CD8-positive, alpha-beta T cell (primary cell): ENCODE measurements at regions of chr16 and their contacts with region 1.

Region 1: DNA sequence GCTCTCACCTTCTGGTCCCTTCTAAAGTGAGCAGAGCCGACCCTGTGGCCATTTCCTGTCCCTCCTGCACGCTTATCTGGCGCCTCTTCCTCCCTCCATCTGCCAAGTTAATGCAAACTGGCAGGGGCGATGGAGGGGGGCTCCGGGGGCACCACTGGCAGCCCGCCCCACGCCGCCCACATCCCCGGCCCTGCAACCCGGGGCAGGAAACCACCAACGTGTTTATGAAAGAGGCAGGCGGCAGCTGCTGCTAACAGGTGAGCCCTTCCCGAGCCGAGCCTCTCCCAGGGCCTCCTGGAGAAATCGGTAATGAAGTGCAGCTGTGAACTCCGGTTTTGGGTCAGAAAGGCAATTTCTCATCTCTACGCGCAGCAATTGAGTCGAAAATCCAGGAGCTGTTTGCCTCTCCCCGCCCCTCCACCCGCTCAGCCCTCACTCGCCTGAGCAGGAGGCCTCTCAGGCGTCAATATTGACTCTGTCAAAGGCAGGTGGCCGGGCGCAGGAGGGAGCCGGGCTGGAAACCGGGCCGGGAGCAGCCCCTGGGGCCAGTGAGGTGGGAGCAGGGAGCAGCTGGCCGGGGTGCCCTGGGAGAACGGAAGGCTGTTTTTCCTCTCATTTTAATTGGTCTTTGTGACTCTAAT is 164.4 kb upstream of the GSE1 start:
- DNase-seq: peak; percentile 34 to 90 (median 71)
- ATAC-seq: peak; percentile 83
- H3K4me3 ChIP-seq: peak overlapping the region; percentile 0 to 39
- H3K4me3 Mint-ChIP-seq: peak overlapping the region; percentile 70
- H3K27ac ChIP-seq: peak overlapping the region; percentile 52 to 64
- H3K27ac Mint-ChIP-seq: peak overlapping the region; percentile 97
- H3K4me1 ChIP-seq: peaks cover 76% of the 10 kb centered on the region
- H3K4me1 Mint-ChIP-seq: peaks cover 61% of the 10 kb centered on the region
- H3K27me3 ChIP-seq: no peaks in the 10 kb centered on the region
- H3K27me3 Mint-ChIP-seq: no peaks in the 10 kb centered on the region
- CTCF ChIP-seq: no peak

Region 2: DNA sequence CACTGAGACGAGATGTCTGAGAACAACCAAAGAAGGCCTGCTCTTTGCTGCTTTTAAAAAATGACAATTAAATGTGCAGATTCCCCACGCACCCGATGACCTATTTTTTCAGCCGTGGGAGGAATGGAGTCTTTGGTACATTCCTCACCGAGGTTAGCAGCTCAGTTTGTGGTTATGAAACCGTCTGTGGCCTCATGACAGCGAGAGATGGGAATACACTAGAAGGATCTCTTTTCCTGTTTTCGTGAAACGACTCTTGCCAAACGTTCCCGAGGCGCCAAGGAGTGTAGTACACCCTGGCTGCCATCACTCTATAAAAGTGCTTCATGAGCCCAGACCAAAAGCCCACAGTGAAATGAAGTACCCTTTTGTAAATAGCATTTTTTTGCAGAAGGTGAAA is 541.1 kb before region 1 on chr16:
- CTCF ChIA-PET with region 1: no interaction called
- POLR2A ChIA-PET with region 1: no interaction called
- intact Hi-C with region 1: no loop called
- DNase-seq: no peak
- ATAC-seq: no peak
- H3K4me3 ChIP-seq: no peak overlapping the region
- H3K4me3 Mint-ChIP-seq: no peak overlapping the region
- H3K27ac ChIP-seq: no peak overlapping the region
- H3K27ac Mint-ChIP-seq: no peak overlapping the region
- H3K4me1 ChIP-seq: no peaks in the 10 kb centered on the region
- H3K4me1 Mint-ChIP-seq: no peaks in the 10 kb centered on the region
- H3K27me3 ChIP-seq: no peaks in the 10 kb centered on the region
- H3K27me3 Mint-ChIP-seq: no peaks in the 10 kb centered on the region
- CTCF ChIP-seq: no peak

Region 3: GRCh38 chr16:85420501-85421337 is 28.0 kb before region 1 on chr16:
- CTCF ChIA-PET with region 1: interaction called, 12 read pairs
- POLR2A ChIA-PET with region 1: interaction called, 6 read pairs
- intact Hi-C with region 1: no loop called
- DNase-seq: peak; percentile 60 to 87 (median 72)
- ATAC-seq: peak; percentile 91
- H3K4me3 ChIP-seq: no peak overlapping the region
- H3K4me3 Mint-ChIP-seq: no peak overlapping the region
- H3K27ac ChIP-seq: no peak overlapping the region
- H3K27ac Mint-ChIP-seq: no peak overlapping the region
- H3K4me1 ChIP-seq: peaks cover 7% of the 10 kb centered on the region
- H3K4me1 Mint-ChIP-seq: peaks cover 2% of the 10 kb centered on the region
- H3K27me3 ChIP-seq: no peaks in the 10 kb centered on the region
- H3K27me3 Mint-ChIP-seq: peaks cover 2% of the 10 kb centered on the region
- CTCF ChIP-seq: peak; percentile 100

Region 4: GRCh38 chr16:85461814-85462713 is 13.4 kb after region 1 on chr16:
- CTCF ChIA-PET with region 1: interaction called, 20 read pairs
- POLR2A ChIA-PET with region 1: interaction called, 23 read pairs
- intact Hi-C with region 1: no loop called
- DNase-seq: peak in 5 of 9 experiments; percentile 21 to 59 (median 51)
- ATAC-seq: peak; percentile 81
- H3K4me3 ChIP-seq: peak overlapping the region; percentile 33 to 70
- H3K4me3 Mint-ChIP-seq: peak overlapping the region; percentile 90
- H3K27ac ChIP-seq: no peak overlapping the region
- H3K27ac Mint-ChIP-seq: no peak overlapping the region
- H3K4me1 ChIP-seq: peaks cover 19% of the 10 kb centered on the region
- H3K4me1 Mint-ChIP-seq: peaks cover 13% of the 10 kb centered on the region
- H3K27me3 ChIP-seq: peaks cover 0 to 18% of the 10 kb centered on the region in 2 experiments
- H3K27me3 Mint-ChIP-seq: peaks cover 15% of the 10 kb centered on the region
- CTCF ChIP-seq: no peak